Breast epithelium (tissue), 4 donors: ENCODE measurements at regions of chr12 and their contacts with region 1.

Region 1: GRCh38 chr12:82723093-82723492 is 36.4 kb downstream of the TMTC2 start:
- DNase-seq: no peak
- H3K4me3 ChIP-seq: no peak overlapping the region
- H3K27ac ChIP-seq: no peak overlapping the region
- H3K4me1 ChIP-seq: no peaks in the 10 kb centered on the region
- H3K27me3 ChIP-seq: no peaks in the 10 kb centered on the region
- CTCF ChIP-seq: no peak
- POLR2A ChIP-seq: no peak

Region 2: GRCh38 chr12:82660541-82661325 is 62.4 kb before region 1 on chr12:
- intact Hi-C with region 1: no loop called
- DNase-seq: no peak
- H3K4me3 ChIP-seq: no peak overlapping the region
- H3K27ac ChIP-seq: no peak overlapping the region
- H3K4me1 ChIP-seq: no peaks in the 10 kb centered on the region
- H3K27me3 ChIP-seq: no peaks in the 10 kb centered on the region
- CTCF ChIP-seq: no peak
- POLR2A ChIP-seq: no peak

Region 3: GRCh38 chr12:82682851-82683261 is 40.2 kb before region 1 on chr12:
- intact Hi-C with region 1: no loop called
- DNase-seq: no peak
- H3K4me3 ChIP-seq: no peak overlapping the region
- H3K27ac ChIP-seq: peak overlapping the region in 1 of 2 donors; percentile 33
- H3K4me1 ChIP-seq: peaks cover 0 to 8% of the 10 kb centered on the region in 2 donors
- H3K27me3 ChIP-seq: no peaks in the 10 kb centered on the region
- CTCF ChIP-seq: no peak
- POLR2A ChIP-seq: no peak

Region 4: DNA sequence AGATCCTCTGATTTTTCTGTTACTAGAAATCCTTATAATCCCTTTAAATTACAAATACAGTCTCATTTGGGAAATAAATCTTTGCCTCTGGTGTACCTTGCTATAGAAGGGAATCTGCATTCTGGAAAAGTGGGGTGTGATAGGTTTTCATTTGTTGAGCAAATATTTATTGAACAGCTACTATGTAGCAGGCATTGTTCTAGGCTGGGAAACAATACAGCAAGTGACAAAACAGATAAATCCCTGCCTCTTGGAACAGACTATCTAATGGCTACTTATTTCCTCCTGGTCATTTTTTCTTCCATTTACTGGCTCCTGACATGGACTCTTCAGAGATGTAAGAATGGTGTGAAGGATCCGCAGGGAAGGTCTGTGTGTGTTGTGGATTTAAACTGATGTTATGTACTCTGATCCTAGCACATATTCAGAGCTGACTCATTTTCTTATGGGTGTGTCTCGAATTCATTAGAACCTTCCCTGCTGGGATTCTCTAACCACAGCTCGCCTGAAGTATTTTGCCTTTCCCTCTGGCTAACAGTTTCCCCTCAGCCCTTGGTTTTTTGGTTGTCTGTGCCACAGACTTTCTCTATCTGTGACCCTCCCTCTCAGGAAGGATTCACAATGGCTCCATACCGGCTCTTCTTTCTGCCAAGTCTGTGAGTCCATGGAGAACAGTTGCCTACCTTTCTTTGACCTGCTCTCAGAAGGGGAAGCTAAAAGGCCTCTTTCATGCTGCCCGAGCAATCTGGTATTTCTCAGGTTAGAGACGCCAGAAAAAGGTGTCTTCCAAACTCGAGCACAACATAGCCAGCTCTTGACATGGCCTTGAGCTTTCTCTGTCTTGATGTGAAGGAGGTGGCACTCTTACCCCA is 17.3 kb after region 1 on chr12:
- intact Hi-C with region 1: no loop called
- DNase-seq: no peak
- H3K4me3 ChIP-seq: no peak overlapping the region
- H3K27ac ChIP-seq: no peak overlapping the region
- H3K4me1 ChIP-seq: no peaks in the 10 kb centered on the region
- H3K27me3 ChIP-seq: no peaks in the 10 kb centered on the region
- CTCF ChIP-seq: no peak
- POLR2A ChIP-seq: no peak

Region 5: GRCh38 chr12:82793751-82794281 is 70.7 kb after region 1 on chr12:
- intact Hi-C with region 1: loop called (anchors 2 kb)
- DNase-seq: no peak
- H3K4me3 ChIP-seq: no peak overlapping the region
- H3K27ac ChIP-seq: no peak overlapping the region
- H3K4me1 ChIP-seq: no peaks in the 10 kb centered on the region
- H3K27me3 ChIP-seq: no peaks in the 10 kb centered on the region
- CTCF ChIP-seq: no peak
- POLR2A ChIP-seq: no peak